B cell (primary cell): ENCODE measurements at regions of chr3 and their contacts with region 1.

Region 1: GRCh38 chr3:25594007-25594502 is 70.7 kb downstream of the TOP2B start:
- DNase-seq: peak; percentile 45
- ATAC-seq: peak; percentile 54
- H3K4me3 ChIP-seq: no peak overlapping the region
- H3K4me3 Mint-ChIP-seq: no peak overlapping the region
- H3K27ac ChIP-seq: no peak overlapping the region
- H3K27ac Mint-ChIP-seq: no peak overlapping the region
- H3K4me1 ChIP-seq: no peaks in the 10 kb centered on the region
- H3K4me1 Mint-ChIP-seq: no peaks in the 10 kb centered on the region
- H3K27me3 ChIP-seq: no peaks in the 10 kb centered on the region
- H3K27me3 Mint-ChIP-seq: no peaks in the 10 kb centered on the region
- CTCF ChIP-seq: peak; percentile 86

Region 2: DNA sequence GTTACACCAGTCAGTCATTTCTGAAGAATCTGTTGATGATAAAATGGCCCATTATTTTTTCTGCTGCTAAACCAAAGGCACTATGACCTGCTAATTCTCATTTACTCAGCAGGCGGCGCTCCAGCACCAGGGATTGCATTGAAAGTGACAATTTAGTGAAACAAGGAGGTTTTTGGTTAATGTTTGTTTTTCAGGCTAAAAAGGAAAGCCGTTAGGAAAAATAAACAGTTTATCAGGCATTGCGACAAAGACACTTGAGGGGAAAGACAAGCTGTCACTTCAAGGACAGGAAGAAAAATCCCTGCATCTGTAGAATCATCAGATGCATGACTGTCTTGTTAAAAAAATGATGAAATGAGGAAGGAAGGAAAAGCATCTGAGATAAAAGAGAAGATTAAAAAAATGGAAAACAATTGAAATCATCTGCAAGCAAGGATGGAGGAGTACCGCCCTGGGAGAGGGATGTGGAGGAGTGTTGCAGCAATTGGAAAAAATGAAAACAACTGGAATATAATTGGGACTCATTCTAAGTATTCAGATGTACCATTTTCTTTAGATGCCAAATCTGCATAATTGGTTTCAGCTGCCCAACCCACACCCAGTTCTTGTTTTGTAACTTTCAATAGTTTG is 1594.9 kb before region 1 on chr3:
- CTCF ChIA-PET with region 1: no interaction called
- POLR2A ChIA-PET with region 1: no interaction called
- intact Hi-C with region 1: loop called (anchors 2 kb)
- DNase-seq: peak; percentile 65
- ATAC-seq: peak; percentile 47
- H3K4me3 ChIP-seq: no peak overlapping the region
- H3K4me3 Mint-ChIP-seq: no peak overlapping the region
- H3K27ac ChIP-seq: no peak overlapping the region
- H3K27ac Mint-ChIP-seq: no peak overlapping the region
- H3K4me1 ChIP-seq: peaks cover 4 to 7% of the 10 kb centered on the region in 2 donors
- H3K4me1 Mint-ChIP-seq: peaks cover 6% of the 10 kb centered on the region
- H3K27me3 ChIP-seq: no peaks in the 10 kb centered on the region
- H3K27me3 Mint-ChIP-seq: peaks cover 8% of the 10 kb centered on the region
- CTCF ChIP-seq: peak; percentile 94

Region 3: GRCh38 chr3:24264748-24265158 is 1329.3 kb before region 1 on chr3:
- CTCF ChIA-PET with region 1: no interaction called
- POLR2A ChIA-PET with region 1: no interaction called
- intact Hi-C with region 1: loop called (anchors 5 kb)
- DNase-seq: peak; percentile 54
- ATAC-seq: peak; percentile 47
- H3K4me3 ChIP-seq: no peak overlapping the region
- H3K4me3 Mint-ChIP-seq: no peak overlapping the region
- H3K27ac ChIP-seq: no peak overlapping the region
- H3K27ac Mint-ChIP-seq: no peak overlapping the region
- H3K4me1 ChIP-seq: no peaks in the 10 kb centered on the region
- H3K4me1 Mint-ChIP-seq: no peaks in the 10 kb centered on the region
- H3K27me3 ChIP-seq: no peaks in the 10 kb centered on the region
- H3K27me3 Mint-ChIP-seq: peaks cover 10% of the 10 kb centered on the region
- CTCF ChIP-seq: peak; percentile 80

Region 4: DNA sequence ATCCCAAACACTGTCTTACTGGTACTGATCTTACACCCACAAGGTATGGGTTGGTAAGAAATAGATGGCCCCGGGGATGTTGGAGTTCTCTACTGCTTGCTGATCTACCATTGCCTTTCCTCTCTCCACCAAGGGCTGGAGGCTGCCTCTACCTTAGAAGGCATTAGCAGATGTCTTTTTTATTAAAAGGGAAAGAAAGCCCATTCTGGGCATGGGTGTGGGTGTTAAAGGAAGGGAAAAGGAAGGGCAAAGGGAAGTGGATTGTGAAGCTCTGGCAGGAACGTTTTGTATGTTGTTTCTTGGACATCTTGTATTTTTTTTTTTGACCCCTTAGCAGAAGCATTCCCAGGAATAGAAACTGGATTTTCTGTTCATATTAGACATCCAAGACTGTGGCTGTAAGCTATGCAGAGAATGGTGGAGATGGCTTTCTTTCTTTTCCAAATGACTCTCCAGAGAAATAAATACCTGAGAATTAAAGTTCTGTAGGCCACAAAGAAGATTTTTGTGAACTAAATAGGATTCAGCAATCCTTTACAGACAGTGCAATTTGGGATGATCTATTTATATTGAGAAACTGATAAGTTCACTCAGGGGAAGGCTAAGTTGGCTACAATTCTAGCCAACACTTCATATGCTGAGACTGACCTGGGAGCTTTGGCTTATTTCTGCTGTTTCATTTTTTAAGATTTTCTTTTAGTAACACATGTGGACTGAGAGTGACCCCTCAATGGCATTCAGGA is 38.2 kb before region 1 on chr3:
- CTCF ChIA-PET with region 1: no interaction called
- POLR2A ChIA-PET with region 1: no interaction called
- intact Hi-C with region 1: no loop called
- DNase-seq: no peak
- ATAC-seq: no peak
- H3K4me3 ChIP-seq: no peak overlapping the region
- H3K4me3 Mint-ChIP-seq: no peak overlapping the region
- H3K27ac ChIP-seq: no peak overlapping the region
- H3K27ac Mint-ChIP-seq: no peak overlapping the region
- H3K4me1 ChIP-seq: no peaks in the 10 kb centered on the region
- H3K4me1 Mint-ChIP-seq: no peaks in the 10 kb centered on the region
- H3K27me3 ChIP-seq: peaks cover 0 to 2% (median 0%) of the 10 kb centered on the region in 4 experiments
- H3K27me3 Mint-ChIP-seq: peaks cover 4% of the 10 kb centered on the region
- CTCF ChIP-seq: no peak

Region 5: GRCh38 chr3:25604107-25604805 is 10.2 kb after region 1 on chr3:
- CTCF ChIA-PET with region 1: interaction called, 23 read pairs
- POLR2A ChIA-PET with region 1: no interaction called
- intact Hi-C with region 1: no loop called
- DNase-seq: no peak
- ATAC-seq: no peak
- H3K4me3 ChIP-seq: no peak overlapping the region
- H3K4me3 Mint-ChIP-seq: no peak overlapping the region
- H3K27ac ChIP-seq: no peak overlapping the region
- H3K27ac Mint-ChIP-seq: no peak overlapping the region
- H3K4me1 ChIP-seq: no peaks in the 10 kb centered on the region
- H3K4me1 Mint-ChIP-seq: no peaks in the 10 kb centered on the region
- H3K27me3 ChIP-seq: no peaks in the 10 kb centered on the region
- H3K27me3 Mint-ChIP-seq: no peaks in the 10 kb centered on the region
- CTCF ChIP-seq: no peak

Region 6: GRCh38 chr3:26668171-26668570 is 1074.1 kb after region 1 on chr3:
- CTCF ChIA-PET with region 1: no interaction called
- POLR2A ChIA-PET with region 1: no interaction called
- intact Hi-C with region 1: no loop called
- DNase-seq: no peak
- ATAC-seq: no peak
- H3K4me3 ChIP-seq: no peak overlapping the region
- H3K4me3 Mint-ChIP-seq: no peak overlapping the region
- H3K27ac ChIP-seq: no peak overlapping the region
- H3K27ac Mint-ChIP-seq: no peak overlapping the region
- H3K4me1 ChIP-seq: no peaks in the 10 kb centered on the region
- H3K4me1 Mint-ChIP-seq: no peaks in the 10 kb centered on the region
- H3K27me3 ChIP-seq: no peaks in the 10 kb centered on the region
- H3K27me3 Mint-ChIP-seq: no peaks in the 10 kb centered on the region
- CTCF ChIP-seq: no peak